Body of pancreas (tissue), 4 donors: ENCODE measurements at regions of chr4 and their contacts with region 1.

Region 1: GRCh38 chr4:16264798-16265197 is 38.5 kb upstream of the TAPT1 start:
- DNase-seq: peak in 1 of 4 donors; percentile 24
- ATAC-seq: no peak
- H3K4me3 ChIP-seq: no peak overlapping the region
- H3K27ac ChIP-seq: no peak overlapping the region
- H3K4me1 ChIP-seq: no peaks in the 10 kb centered on the region
- H3K27me3 ChIP-seq: no peaks in the 10 kb centered on the region
- CTCF ChIP-seq: peak; percentile 22 to 68 (median 59)
- POLR2A ChIP-seq: no peak

Region 2: DNA sequence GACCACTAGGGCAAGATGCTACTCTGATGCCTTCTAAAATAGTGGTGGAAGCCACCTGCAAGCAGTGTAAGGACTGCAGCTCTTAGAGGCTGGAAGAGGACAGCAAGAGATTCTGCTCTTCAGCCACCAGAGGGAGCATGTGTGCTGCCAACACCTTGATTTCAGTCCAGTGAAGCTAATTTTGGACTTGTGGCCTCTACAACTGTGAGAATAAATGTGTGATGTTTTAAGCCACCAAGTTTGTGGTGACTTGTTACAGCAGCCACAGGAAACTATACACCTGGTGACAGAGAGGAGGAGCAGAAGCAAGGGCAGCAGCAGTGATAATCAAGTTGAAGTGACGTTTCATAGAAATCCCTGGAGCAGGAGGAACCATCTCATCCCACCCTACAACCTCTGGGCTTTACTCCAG is 382.1 kb before region 1 on chr4:
- intact Hi-C with region 1: loop called (anchors 10 kb)
- DNase-seq: peak; percentile 41 to 59 (median 52)
- ATAC-seq: peak; percentile 77
- H3K4me3 ChIP-seq: no peak overlapping the region
- H3K27ac ChIP-seq: no peak overlapping the region
- H3K4me1 ChIP-seq: no peaks in the 10 kb centered on the region
- H3K27me3 ChIP-seq: no peaks in the 10 kb centered on the region
- CTCF ChIP-seq: peak; percentile 55 to 84 (median 79)
- POLR2A ChIP-seq: no peak

Region 3: DNA sequence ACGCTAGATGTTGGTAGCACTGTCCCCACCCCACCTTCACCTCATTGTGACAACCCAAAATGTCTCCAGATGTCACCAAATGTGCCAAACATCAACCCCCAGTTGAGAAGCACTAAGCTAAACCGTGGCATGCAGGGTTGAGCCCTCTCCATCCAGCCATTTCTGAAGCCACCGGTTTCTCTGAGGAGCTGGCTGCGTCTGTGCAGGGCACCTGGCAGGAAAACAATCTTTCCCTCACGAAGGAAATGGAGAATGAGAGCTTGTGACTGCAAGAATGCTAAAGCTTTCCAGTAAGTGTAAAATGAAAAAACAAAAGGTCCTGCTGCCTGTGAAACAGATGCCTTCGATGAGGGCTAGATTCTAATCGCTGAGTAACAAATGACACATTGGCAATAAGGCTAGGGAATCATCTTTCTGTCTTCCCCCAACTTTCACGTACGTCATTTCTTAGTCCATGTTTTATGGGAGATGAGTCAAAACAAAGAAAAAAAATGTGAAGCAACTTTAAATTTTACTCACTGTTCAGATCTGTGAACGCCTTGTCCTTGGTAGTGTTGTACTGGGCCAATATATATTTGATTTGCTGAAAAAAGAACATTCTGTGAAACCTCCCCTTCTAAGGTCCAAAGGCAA is 240.9 kb before region 1 on chr4:
- intact Hi-C with region 1: loop called (anchors 5 kb)
- DNase-seq: no peak
- ATAC-seq: no peak
- H3K4me3 ChIP-seq: no peak overlapping the region
- H3K27ac ChIP-seq: no peak overlapping the region
- H3K4me1 ChIP-seq: no peaks in the 10 kb centered on the region
- H3K27me3 ChIP-seq: no peaks in the 10 kb centered on the region
- CTCF ChIP-seq: no peak
- POLR2A ChIP-seq: no peak

Region 4: DNA sequence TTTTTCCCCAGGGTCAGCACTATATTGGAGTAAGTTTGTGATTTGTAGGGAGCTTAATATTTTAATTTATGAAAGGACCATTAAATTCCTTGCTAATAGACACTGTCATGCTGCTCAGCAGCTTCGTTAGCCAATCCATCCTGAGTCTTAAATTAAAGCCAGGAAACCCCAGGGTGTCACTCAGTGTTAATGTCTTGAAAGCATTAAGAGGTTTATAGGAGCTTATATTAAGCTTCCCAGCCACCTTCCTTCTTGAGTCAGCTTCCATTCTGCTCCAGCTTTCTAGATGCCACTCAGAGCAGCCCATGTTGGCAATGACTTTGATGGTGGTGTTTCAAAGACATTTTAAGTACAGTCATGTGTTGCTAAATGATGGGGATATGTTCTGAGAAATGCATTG is 153.9 kb before region 1 on chr4:
- intact Hi-C with region 1: no loop called
- DNase-seq: no peak
- ATAC-seq: no peak
- H3K4me3 ChIP-seq: no peak overlapping the region
- H3K27ac ChIP-seq: no peak overlapping the region
- H3K4me1 ChIP-seq: no peaks in the 10 kb centered on the region
- H3K27me3 ChIP-seq: no peaks in the 10 kb centered on the region
- CTCF ChIP-seq: no peak
- POLR2A ChIP-seq: no peak

Region 5: DNA sequence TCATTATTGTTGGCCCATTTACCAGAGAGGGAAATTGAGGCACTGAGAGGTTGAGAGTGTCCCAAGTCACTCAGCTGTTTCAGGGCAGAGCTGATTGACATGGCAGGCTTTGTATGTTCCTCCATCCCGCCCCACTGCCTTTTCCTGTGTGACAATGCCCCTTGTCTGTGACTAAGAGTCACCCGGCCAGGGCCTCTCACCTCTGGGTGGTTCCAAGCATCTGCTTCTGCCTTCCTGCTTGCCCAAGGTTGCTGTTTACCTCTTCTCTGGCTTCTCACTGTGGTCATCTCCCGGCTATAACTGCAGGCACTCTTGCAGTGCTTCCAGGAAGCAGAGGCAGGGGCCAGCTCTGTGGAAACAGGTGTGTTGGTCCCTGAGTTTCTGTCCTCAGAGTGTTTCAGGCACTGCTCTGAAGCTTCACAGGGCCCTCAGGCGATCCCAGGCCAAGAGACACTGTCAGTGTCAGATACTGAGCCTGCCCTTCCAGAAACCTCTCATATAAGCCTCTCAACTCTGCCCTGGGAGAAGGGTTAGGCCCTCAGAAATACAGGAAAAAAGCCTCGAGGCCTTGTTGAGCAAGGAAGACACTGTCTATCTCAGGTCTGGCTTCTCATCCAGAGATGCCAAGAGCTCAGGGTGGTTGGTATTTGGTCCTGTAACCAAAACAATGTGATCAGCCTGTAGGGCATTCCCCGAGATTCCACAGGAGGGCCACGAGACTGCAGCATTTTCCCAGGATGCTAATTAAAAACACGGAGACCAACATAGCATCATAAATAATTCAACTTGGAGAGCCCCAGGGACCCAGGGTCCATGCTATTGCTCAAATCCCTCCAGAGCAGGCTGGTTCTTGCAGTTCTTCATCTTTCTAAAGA is 139.0 kb before region 1 on chr4:
- intact Hi-C with region 1: no loop called
- DNase-seq: no peak
- ATAC-seq: no peak
- H3K4me3 ChIP-seq: no peak overlapping the region
- H3K27ac ChIP-seq: no peak overlapping the region
- H3K4me1 ChIP-seq: peaks cover 22% of the 10 kb centered on the region
- H3K27me3 ChIP-seq: no peaks in the 10 kb centered on the region
- CTCF ChIP-seq: no peak
- POLR2A ChIP-seq: no peak